WTC11 (cell line): ENCODE measurements at regions of chr3 and their contacts with region 1.

Region 1: GRCh38 chr3:59052803-59053411 is 3.1 kb upstream of the CFAP20DC start:
- DNase-seq: no peak
- ATAC-seq: no peak
- H3K4me3 Mint-ChIP-seq: no peak overlapping the region
- H3K27ac Mint-ChIP-seq: no peak overlapping the region
- H3K4me1 Mint-ChIP-seq: peaks cover 16% of the 10 kb centered on the region
- H3K27me3 Mint-ChIP-seq: peaks cover 4% of the 10 kb centered on the region; the same call in 1 of the 2 replicates
- CTCF ChIP-seq: 0 out of 2 replicates have a peak, but pooled peaks have one; percentile 42

Region 2: GRCh38 chr3:58824285-58824684 is 228.6 kb before region 1 on chr3:
- CTCF ChIA-PET with region 1: interaction called, 14 read pairs
- POLR2A ChIA-PET with region 1: no interaction called
- DNase-seq: peak; percentile 77
- ATAC-seq: peak; percentile 76
- H3K4me3 Mint-ChIP-seq: no peak overlapping the region
- H3K27ac Mint-ChIP-seq: no peak overlapping the region
- H3K4me1 Mint-ChIP-seq: peaks cover 10% of the 10 kb centered on the region
- H3K27me3 Mint-ChIP-seq: no peaks in the 10 kb centered on the region
- CTCF ChIP-seq: peak; percentile 36; the same call in 1 of the 2 replicates

Region 3: DNA sequence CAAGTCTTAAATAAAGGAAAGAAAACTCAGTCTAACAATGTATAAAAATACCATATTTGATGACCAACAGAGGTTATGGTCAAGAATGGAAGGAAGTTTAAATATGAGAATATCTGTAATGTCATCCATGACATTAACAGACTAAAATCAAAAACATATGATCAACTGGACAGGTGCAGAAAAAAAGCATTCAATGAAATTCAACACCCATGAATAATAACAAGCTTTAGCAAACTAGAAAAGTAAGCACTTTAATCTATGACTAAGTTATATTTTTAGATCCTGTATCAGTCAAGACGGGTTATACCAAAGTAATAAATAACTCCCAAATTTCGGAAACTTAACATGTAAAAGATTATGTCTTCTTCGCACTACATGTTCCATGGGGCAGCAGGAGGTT is 64.9 kb before region 1 on chr3:
- CTCF ChIA-PET with region 1: no interaction called
- POLR2A ChIA-PET with region 1: no interaction called
- DNase-seq: no peak
- ATAC-seq: no peak
- H3K4me3 Mint-ChIP-seq: no peak overlapping the region
- H3K27ac Mint-ChIP-seq: no peak overlapping the region
- H3K4me1 Mint-ChIP-seq: peaks cover 2% of the 10 kb centered on the region; the same call in 1 of the 2 replicates
- H3K27me3 Mint-ChIP-seq: no peaks in the 10 kb centered on the region
- CTCF ChIP-seq: no peak

Region 4: DNA sequence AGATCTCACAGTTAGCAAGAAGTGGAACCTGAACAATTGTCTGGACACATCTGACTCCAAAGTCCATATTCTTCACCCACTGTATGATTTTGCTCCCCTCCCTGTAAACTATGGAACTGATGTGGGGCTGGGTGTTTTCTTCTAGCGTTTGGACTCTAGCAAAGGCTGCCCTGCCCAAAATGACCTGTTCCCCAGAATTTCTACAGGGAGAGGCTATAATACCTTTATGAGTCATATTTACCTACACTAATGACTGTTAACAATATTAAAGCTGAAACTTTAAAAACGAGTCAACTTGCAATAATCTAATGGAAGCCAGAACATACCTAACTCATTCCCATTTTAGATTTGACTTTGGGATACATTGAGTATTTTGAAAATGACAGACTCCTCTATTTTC is 528.1 kb after region 1 on chr3:
- CTCF ChIA-PET with region 1: no interaction called
- POLR2A ChIA-PET with region 1: no interaction called
- DNase-seq: no peak
- ATAC-seq: no peak
- H3K4me3 Mint-ChIP-seq: no peak overlapping the region
- H3K27ac Mint-ChIP-seq: no peak overlapping the region
- H3K4me1 Mint-ChIP-seq: no peaks in the 10 kb centered on the region
- H3K27me3 Mint-ChIP-seq: 0 out of 2 replicates have a peak, but pooled peaks cover 3% of the 10 kb centered on the region
- CTCF ChIP-seq: no peak